CD8-positive, alpha-beta memory T cell (primary cell): ENCODE measurements at regions of chr19 and their contacts with region 1.

Region 1: GRCh38 chr19:48954595-48955310 is at the start of gene BAX:
- DNase-seq: peak; percentile 70 to 88 (median 79)
- H3K4me3 ChIP-seq: peak within 1 kb of the TSS; percentile 75
- H3K4me3 Mint-ChIP-seq: peak within 1 kb of the TSS; percentile 90 to 96 (median 93)
- H3K27ac ChIP-seq: peak within 1 kb of the TSS; percentile 84
- H3K27ac Mint-ChIP-seq: peak within 1 kb of the TSS; percentile 43 to 95 (median 89)
- H3K4me1 ChIP-seq: peaks cover 17% of the 10 kb centered on the region
- H3K4me1 Mint-ChIP-seq: peaks cover 24 to 40% (median 35%) of the 10 kb centered on the region in 3 donors
- H3K27me3 ChIP-seq: no peaks in the 10 kb centered on the region
- H3K27me3 Mint-ChIP-seq: no peaks in the 10 kb centered on the region
- total RNA-seq, gene BAX: 315 to 331 TPM

Region 2: DNA sequence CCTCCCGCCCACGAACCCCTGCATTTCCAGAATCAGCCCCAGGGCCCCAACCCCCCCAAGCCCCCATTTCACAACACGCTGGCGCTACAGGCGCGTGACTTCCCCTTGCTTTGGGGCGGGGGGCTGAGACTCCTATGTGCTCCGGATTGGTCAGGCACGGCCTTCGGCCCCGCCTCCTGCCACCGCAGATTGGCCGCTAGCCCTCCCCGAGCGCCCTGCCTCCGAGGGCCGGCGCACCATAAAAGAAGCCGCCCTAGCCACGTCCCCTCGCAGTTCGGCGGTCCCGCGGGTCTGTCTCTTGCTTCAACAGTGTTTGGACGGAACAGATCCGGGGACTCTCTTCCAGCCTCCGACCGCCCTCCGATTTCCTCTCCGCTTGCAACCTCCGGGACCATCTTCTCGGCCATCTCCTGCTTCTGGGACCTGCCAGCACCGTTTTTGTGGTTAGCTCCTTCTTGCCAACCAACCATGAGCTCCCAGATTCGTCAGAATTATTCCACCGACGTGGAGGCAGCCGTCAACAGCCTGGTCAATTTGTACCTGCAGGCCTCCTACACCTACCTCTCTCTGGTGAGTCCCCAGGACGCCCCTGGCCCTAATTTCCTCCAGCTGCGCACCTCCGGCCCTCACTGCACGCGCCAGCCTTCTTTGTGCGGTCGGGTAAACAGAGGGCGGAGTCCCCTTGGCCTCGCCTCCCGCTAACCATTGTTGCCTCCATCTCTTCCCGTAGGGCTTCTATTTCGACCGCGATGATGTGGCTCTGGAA is 10.5 kb after region 1 on chr19 and contains the start of gene FTL:
- CTCF ChIA-PET with region 1: interaction called, 5 read pairs
- POLR2A ChIA-PET with region 1: interaction called, 14 read pairs
- DNase-seq: peak; percentile 76 to 90 (median 85)
- H3K4me3 ChIP-seq: peak within 1 kb of the TSS; percentile 88
- H3K4me3 Mint-ChIP-seq: peak within 1 kb of the TSS; percentile 91 to 100 (median 100)
- H3K27ac ChIP-seq: peak within 1 kb of the TSS; percentile 94
- H3K27ac Mint-ChIP-seq: peak within 1 kb of the TSS; percentile 90 to 99 (median 97)
- H3K4me1 ChIP-seq: peaks cover 42% of the 10 kb centered on the region
- H3K4me1 Mint-ChIP-seq: peaks cover 50 to 76% (median 59%) of the 10 kb centered on the region in 3 donors
- H3K27me3 ChIP-seq: no peaks in the 10 kb centered on the region
- H3K27me3 Mint-ChIP-seq: peaks cover 0 to 9% of the 10 kb centered on the region in 2 donors
- total RNA-seq, gene FTL: 1,478 to 1,489 TPM

Region 3: GRCh38 chr19:49014123-49014869 is 59.5 kb after region 1 on chr19:
- CTCF ChIA-PET with region 1: no interaction called
- POLR2A ChIA-PET with region 1: no interaction called
- DNase-seq: no peak
- H3K4me3 ChIP-seq: no peak overlapping the region
- H3K4me3 Mint-ChIP-seq: no peak overlapping the region
- H3K27ac ChIP-seq: no peak overlapping the region
- H3K27ac Mint-ChIP-seq: no peak overlapping the region
- H3K4me1 ChIP-seq: peaks cover 4% of the 10 kb centered on the region
- H3K4me1 Mint-ChIP-seq: peaks cover 10 to 19% (median 10%) of the 10 kb centered on the region in 3 donors
- H3K27me3 ChIP-seq: no peaks in the 10 kb centered on the region
- H3K27me3 Mint-ChIP-seq: no peaks in the 10 kb centered on the region

Region 4: DNA sequence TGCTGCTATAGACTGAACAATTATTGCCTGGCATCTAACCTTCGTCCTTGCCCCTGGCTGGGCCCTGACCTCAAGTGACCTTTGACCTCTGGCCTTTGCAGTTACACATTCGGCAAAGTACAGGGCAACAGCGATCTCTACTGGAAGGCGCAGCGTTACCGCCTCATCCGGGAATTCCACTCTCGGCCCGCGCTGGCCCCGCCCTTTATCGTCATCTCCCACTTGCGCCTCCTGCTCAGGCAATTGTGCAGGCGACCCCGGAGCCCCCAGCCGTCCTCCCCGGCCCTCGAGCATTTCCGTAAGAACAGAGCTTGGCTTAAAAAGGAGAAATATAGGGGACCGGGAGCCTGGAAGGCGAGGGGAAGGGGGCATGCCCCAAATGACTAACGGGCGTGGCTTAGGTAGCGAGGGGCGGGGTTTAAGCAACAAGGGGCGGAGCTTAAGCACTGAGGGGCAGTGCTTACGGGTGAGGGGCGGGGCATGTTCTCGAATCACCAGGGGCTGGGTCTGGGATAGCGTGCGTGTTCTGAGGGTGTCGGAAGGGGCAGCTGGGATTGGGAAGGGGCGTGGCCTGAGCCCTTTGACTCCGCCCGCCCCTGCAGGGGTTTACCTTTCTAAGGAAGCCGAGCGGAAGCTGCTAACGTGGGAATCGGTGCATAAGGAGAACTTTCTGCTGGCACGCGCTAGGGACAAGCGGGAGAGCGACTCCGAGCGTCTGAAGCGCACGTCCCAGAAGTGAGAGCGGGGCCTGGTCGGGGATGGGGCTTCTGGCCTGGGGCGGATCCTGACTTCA is 255.6 kb after region 1 on chr19:
- CTCF ChIA-PET with region 1: no interaction called
- POLR2A ChIA-PET with region 1: no interaction called
- DNase-seq: peak in 2 of 5 donors; percentile 14 to 34
- H3K4me3 ChIP-seq: no peak overlapping the region
- H3K4me3 Mint-ChIP-seq: peak overlapping the region in 1 of 7 donors; percentile 54
- H3K27ac ChIP-seq: no peak overlapping the region
- H3K27ac Mint-ChIP-seq: peak overlapping the region in 1 of 8 donors; percentile 71
- H3K4me1 ChIP-seq: no peaks in the 10 kb centered on the region
- H3K4me1 Mint-ChIP-seq: peaks cover 9 to 13% (median 12%) of the 10 kb centered on the region in 3 donors
- H3K27me3 ChIP-seq: no peaks in the 10 kb centered on the region
- H3K27me3 Mint-ChIP-seq: peaks cover 9 to 19% of the 10 kb centered on the region in 2 donors

Region 5: DNA sequence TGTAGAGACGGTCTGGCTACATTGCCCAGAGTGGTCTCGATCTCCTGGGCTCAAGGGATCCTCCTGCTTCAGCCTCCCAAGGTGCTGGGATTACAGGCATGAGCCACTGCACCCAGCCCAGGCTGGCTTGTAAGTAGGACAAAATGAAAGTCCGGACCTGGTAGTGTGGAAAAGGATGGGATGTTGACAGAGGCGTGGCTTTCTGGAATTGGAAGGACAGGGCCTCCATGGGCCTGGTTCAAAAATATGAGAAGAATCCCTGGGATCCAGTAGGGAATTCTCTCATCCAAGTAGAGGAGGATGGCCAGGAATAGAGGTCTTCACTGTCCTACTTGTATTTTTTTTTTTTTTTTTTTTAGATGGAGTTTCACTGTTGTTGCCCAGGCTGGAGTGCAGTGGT is 267.8 kb after region 1 on chr19:
- CTCF ChIA-PET with region 1: no interaction called
- POLR2A ChIA-PET with region 1: interaction called, 12 read pairs
- DNase-seq: no peak
- H3K4me3 ChIP-seq: no peak overlapping the region
- H3K4me3 Mint-ChIP-seq: no peak overlapping the region
- H3K27ac ChIP-seq: no peak overlapping the region
- H3K27ac Mint-ChIP-seq: peak overlapping the region in 1 of 8 donors; percentile 61
- H3K4me1 ChIP-seq: no peaks in the 10 kb centered on the region
- H3K4me1 Mint-ChIP-seq: peaks cover 4 to 6% (median 5%) of the 10 kb centered on the region in 3 donors
- H3K27me3 ChIP-seq: peaks cover 4% of the 10 kb centered on the region
- H3K27me3 Mint-ChIP-seq: peaks cover 6 to 25% of the 10 kb centered on the region in 2 donors